ENCODE measurements at regions of chr21 and their contacts with region 1.

Region 1: GRCh38 chr21:44932408-44933181 is 7.2 kb upstream of the SLX9 start:
- DNase-seq: no peak
- H3K4me3 ChIP-seq: peak overlapping the region; percentile 11 to 65 (median 48)
- H3K27ac ChIP-seq: peak overlapping the region in 2 of 4 donors; percentile 7 to 41
- H3K4me1 ChIP-seq: peaks cover 0 to 29% (median 24%) of the 10 kb centered on the region in 4 donors
- H3K27me3 ChIP-seq: peaks cover 10 to 67% (median 42%) of the 10 kb centered on the region in 3 donors
- CTCF ChIP-seq: peak in 3 of 4 experiments; percentile 32 to 75 (median 39)
- EP300 ChIP-seq: no peak
- POLR2A ChIP-seq: no peak

Region 2: DNA sequence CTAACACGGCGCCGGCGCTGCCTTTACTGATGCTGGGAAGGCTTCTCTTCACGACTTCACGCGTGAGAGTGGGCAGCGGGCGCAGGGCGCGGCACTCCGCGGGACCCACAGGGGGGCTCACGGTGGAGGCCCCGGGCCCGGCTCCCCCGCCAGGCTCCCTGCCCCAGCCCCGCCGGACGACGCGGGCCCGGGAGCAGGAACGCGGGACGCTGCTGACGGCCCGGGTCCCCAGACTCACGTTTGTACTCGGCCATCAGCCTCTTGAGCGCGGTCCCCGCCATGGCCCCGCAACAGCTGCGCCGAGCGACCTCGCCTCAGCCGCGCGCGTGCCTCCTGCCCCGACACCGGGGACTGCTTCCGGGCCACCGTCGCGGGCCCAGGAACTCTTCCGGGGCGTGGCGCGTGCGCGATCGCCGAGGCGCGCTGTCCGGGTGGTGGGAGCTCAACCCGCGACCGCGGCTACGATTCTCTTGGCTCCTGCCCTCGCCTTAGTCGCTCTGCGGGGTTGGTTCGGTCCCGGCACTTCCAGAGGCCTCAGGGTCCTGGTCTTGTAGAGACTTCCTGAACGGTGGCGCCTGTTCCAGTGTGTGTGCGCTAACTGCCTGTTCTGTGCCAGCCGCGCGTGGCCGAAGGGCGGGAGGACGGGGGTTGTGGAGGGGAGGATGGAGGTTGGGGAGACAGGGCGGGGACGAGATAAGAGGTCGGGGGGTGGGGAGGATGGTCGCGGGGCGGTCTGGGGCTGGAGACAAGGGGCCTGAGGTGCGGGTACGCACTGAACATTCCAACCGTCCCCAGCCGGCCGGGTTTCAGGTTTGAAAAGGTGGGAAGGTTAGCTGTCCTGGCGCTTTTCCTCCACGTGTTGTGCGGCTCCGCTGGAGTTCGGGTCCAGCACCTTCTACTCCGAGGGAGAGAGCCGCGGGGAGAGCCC is 130.9 kb before region 1 on chr21 and contains the start of gene UBE2G2:
- intact Hi-C with region 1: loop called (anchors 5 kb)
- DNase-seq: peak; percentile 87
- H3K4me3 ChIP-seq: peak within 1 kb of the TSS; percentile 55 to 83 (median 78)
- H3K27ac ChIP-seq: peak within 1 kb of the TSS; percentile 73 to 85 (median 78)
- H3K4me1 ChIP-seq: peaks cover 0 to 34% (median 25%) of the 10 kb centered on the region in 4 donors
- H3K27me3 ChIP-seq: no peaks in the 10 kb centered on the region
- CTCF ChIP-seq: no peak
- EP300 ChIP-seq: no peak
- POLR2A ChIP-seq: peak; percentile 33 to 65
- total RNA-seq, gene UBE2G2: 51.5 to 101 (median 63.1) TPM

Region 3: DNA sequence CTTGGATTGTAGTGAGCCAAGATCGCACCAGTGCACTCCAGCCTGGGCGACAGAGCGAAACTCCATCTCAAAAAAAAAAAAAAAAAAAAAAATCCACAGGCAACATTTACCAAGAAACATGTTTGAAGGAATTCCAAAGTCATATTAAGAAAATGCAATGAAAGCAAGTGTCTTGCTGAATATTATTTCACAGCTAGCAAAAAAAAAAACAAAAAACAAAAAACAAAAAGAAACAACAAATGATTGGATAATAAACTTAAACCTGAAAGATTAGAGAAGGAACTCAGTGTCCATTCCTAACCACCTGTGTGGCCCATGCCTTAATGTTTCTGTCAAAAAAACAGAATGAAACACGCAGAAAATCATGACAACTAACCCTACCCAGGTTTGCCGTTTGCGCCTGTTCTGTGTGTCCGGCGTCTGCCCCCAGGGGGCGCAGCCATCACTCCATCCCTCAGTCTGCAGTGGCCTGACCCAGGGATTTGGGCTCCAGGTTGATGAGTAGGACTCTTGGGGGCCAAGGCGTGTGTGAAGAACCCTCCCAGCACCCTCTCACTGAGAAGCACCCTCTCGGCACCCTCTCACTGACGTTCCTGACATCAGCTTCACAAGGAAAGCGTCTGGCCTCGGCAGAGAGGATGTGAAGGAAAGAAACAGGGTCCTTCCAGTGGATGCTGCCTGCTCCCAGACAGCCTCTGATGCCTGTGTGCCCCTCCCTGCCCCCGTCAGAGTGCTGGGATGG is 39.9 kb before region 1 on chr21:
- intact Hi-C with region 1: loop called (anchors 1 kb)
- DNase-seq: no peak
- H3K4me3 ChIP-seq: no peak overlapping the region
- H3K27ac ChIP-seq: no peak overlapping the region
- H3K4me1 ChIP-seq: no peaks in the 10 kb centered on the region
- H3K27me3 ChIP-seq: peaks cover 0 to 11% (median 0%) of the 10 kb centered on the region in 3 donors
- CTCF ChIP-seq: peak; percentile 68 to 89 (median 84)
- EP300 ChIP-seq: no peak
- POLR2A ChIP-seq: no peak

Region 4: DNA sequence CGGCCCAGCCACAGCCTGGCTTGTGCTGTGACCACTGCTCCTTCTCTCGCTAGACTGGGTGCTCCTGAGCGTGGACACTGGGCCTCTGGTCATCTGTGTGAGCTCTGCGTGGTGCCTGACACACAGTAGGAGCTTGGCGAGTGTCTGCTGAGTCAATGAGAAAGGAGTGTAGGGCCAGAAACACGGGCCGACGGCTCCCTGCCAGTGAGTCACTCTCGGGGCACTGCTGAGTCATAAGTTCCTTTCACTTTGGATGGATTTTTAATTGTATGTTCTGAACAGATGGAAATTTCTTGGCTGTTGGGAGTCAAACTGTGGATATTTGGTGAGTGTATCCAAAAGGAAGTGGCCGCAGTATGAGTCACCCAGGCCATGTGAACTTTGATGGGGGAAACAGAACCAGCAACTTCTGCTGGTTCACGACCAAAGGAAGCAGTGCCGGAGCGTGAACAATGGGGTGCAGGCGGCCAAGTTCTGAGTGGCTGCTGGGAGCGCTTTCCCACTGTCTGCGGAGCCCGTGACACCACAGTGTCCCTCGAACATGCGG is 431.4 kb after region 1 on chr21:
- intact Hi-C with region 1: no loop called
- DNase-seq: peak; percentile 95
- H3K4me3 ChIP-seq: peak overlapping the region in 2 of 4 donors; percentile 4 to 10
- H3K27ac ChIP-seq: peak overlapping the region; percentile 86 to 91 (median 88)
- H3K4me1 ChIP-seq: peaks cover 0 to 34% (median 29%) of the 10 kb centered on the region in 4 donors
- H3K27me3 ChIP-seq: no peaks in the 10 kb centered on the region
- CTCF ChIP-seq: no peak
- EP300 ChIP-seq: peak in 2 of 4 donors; percentile 71 to 87
- POLR2A ChIP-seq: no peak